ENCODE measurements at regions of chr15 and their contacts with region 1.

Region 1: DNA sequence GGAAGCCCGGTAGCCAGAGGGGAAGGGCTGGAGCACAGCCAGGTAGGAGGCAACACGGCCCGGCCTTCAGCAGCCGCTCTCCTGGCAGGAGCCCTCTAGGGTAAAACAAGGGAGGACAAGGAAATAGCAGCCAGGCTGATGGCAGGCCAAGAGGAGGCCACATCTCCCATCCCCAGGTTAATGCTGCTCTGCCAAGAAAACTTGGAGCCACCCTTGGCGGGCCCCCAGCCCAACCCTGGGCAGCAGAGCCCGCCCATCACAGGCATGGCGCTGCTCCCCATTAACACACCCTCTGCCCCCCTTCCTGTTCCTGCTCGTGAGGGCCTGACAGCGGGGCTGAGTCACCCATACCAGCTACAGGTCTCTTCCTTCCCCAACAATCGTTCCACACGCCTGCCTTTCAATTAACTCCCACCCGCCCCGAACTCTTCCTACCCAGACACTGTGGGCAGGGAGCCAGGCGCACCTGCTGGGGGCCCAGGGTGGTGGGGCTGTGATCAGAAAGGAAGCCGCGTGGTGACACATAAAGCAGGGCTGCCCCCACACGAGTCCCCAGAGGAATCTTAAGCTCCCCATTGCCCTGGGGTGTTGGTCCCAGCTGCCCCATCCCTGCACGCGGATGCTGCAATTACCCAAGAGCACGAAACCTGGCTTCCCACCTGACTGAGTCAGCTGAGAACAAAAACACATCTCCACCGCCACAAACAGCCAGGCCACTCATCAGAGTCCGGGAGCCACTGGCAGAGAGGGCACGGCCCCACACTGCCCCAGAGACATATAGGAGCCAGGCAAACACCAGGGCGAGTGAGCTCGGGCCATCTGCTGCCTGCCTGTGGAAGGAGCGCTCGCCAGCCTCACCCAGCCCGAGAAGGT is at the start of gene C15orf62:
- DNase-seq: peak; percentile 85
- ATAC-seq: peak; percentile 82
- H3K4me3 ChIP-seq: peak within 1 kb of the TSS in 4 of 5 experiments; percentile 15 to 52 (median 38)
- H3K4me3 Mint-ChIP-seq: peak within 1 kb of the TSS; percentile 88
- H3K27ac ChIP-seq: peak within 1 kb of the TSS; percentile 42 to 78
- H3K27ac Mint-ChIP-seq: peak within 1 kb of the TSS; percentile 95
- H3K4me1 ChIP-seq: peaks cover 45 to 56% of the 10 kb centered on the region in 2 donors
- H3K4me1 Mint-ChIP-seq: peaks cover 51% of the 10 kb centered on the region
- H3K27me3 ChIP-seq: no peaks in the 10 kb centered on the region
- H3K27me3 Mint-ChIP-seq: no peaks in the 10 kb centered on the region
- CTCF ChIP-seq: no peak
- total RNA-seq, gene C15orf62: 8.6 and 9.5 TPM in 2 replicates

Region 2: GRCh38 chr15:40684381-40684780 is 85.1 kb before region 1 on chr15:
- CTCF ChIA-PET with region 1: interaction called, 19 read pairs
- POLR2A ChIA-PET with region 1: interaction called, 7 read pairs
- intact Hi-C with region 1: no loop called
- DNase-seq: no peak
- ATAC-seq: no peak
- H3K4me3 ChIP-seq: no peak overlapping the region
- H3K4me3 Mint-ChIP-seq: no peak overlapping the region
- H3K27ac ChIP-seq: no peak overlapping the region
- H3K27ac Mint-ChIP-seq: peak overlapping the region; percentile 41
- H3K4me1 ChIP-seq: peaks cover 11 to 15% of the 10 kb centered on the region in 2 donors
- H3K4me1 Mint-ChIP-seq: peaks cover 12% of the 10 kb centered on the region
- H3K27me3 ChIP-seq: no peaks in the 10 kb centered on the region
- H3K27me3 Mint-ChIP-seq: no peaks in the 10 kb centered on the region
- CTCF ChIP-seq: no peak

Region 3: GRCh38 chr15:40746916-40747514 is 22.5 kb before region 1 on chr15:
- CTCF ChIA-PET with region 1: interaction called, 10 read pairs
- POLR2A ChIA-PET with region 1: interaction called, 4 read pairs
- intact Hi-C with region 1: no loop called
- DNase-seq: no peak
- ATAC-seq: no peak
- H3K4me3 ChIP-seq: no peak overlapping the region
- H3K4me3 Mint-ChIP-seq: no peak overlapping the region
- H3K27ac ChIP-seq: no peak overlapping the region
- H3K27ac Mint-ChIP-seq: no peak overlapping the region
- H3K4me1 ChIP-seq: no peaks in the 10 kb centered on the region
- H3K4me1 Mint-ChIP-seq: no peaks in the 10 kb centered on the region
- H3K27me3 ChIP-seq: no peaks in the 10 kb centered on the region
- H3K27me3 Mint-ChIP-seq: no peaks in the 10 kb centered on the region
- CTCF ChIP-seq: no peak

Region 4: GRCh38 chr15:40807028-40807887 is 37.7 kb after region 1 on chr15 and contains the starts of genes DNAJC17 and ZFYVE19:
- CTCF ChIA-PET with region 1: no interaction called
- POLR2A ChIA-PET with region 1: no interaction called
- intact Hi-C with region 1: loop called (anchors 1 kb)
- DNase-seq: peak; percentile 97
- ATAC-seq: peak; percentile 96
- H3K4me3 ChIP-seq: peak within 1 kb of the TSS; percentile 78 to 100 (median 100)
- H3K4me3 Mint-ChIP-seq: peak within 1 kb of the TSS; percentile 99
- H3K27ac ChIP-seq: peak within 1 kb of the TSS; percentile 86 to 95
- H3K27ac Mint-ChIP-seq: peak within 1 kb of the TSS; percentile 98
- H3K4me1 ChIP-seq: peaks cover 12 to 18% of the 10 kb centered on the region in 2 donors
- H3K4me1 Mint-ChIP-seq: peaks cover 24% of the 10 kb centered on the region
- H3K27me3 ChIP-seq: no peaks in the 10 kb centered on the region
- H3K27me3 Mint-ChIP-seq: no peaks in the 10 kb centered on the region
- CTCF ChIP-seq: peak; percentile 11
- total RNA-seq, gene DNAJC17: 46.1 and 52.3 TPM in 2 replicates
- total RNA-seq, gene ZFYVE19: 29.4 and 29.8 TPM in 2 replicates

Region 5: DNA sequence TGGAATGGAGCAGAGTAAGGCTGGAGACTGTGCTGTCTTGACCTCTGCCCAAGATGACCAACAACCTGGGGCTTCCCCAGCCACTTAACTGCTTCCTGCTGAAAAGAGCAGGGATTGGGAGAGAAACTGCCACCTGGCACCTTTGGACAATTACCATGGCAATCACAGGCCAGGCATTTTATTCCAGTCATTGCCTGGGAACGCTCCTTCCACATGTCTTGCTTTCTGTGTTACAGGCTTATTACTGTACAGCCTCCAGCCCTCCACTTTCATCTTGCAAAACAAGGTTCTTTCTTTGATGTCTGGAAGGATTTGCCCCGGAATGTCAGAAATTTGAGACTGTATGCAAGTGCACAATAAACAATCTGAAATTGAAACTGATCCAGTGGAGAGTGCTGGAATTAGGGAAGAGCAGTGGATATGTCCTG is 56.2 kb after region 1 on chr15:
- CTCF ChIA-PET with region 1: no interaction called
- POLR2A ChIA-PET with region 1: no interaction called
- intact Hi-C with region 1: no loop called
- DNase-seq: no peak
- ATAC-seq: no peak
- H3K4me3 ChIP-seq: no peak overlapping the region
- H3K4me3 Mint-ChIP-seq: no peak overlapping the region
- H3K27ac ChIP-seq: no peak overlapping the region
- H3K27ac Mint-ChIP-seq: no peak overlapping the region
- H3K4me1 ChIP-seq: no peaks in the 10 kb centered on the region
- H3K4me1 Mint-ChIP-seq: no peaks in the 10 kb centered on the region
- H3K27me3 ChIP-seq: no peaks in the 10 kb centered on the region
- H3K27me3 Mint-ChIP-seq: no peaks in the 10 kb centered on the region
- CTCF ChIP-seq: no peak

Measured in B cell (primary cell).